AG04449 (cell line): ENCODE measurements at regions of chr5 and their contacts with region 1.

Region 1: GRCh38 chr5:138449501-138450239 is 10.8 kb downstream of the REEP2 start:
- DNase-seq: no peak
- H3K4me3 ChIP-seq: no peak overlapping the region
- CTCF ChIP-seq: peak; percentile 99

Region 2: GRCh38 chr5:138464008-138464387 is 14.3 kb after region 1 on chr5:
- CTCF ChIA-PET with region 1: interaction called, 207 read pairs
- POLR2A ChIA-PET with region 1: interaction called, 24 read pairs
- DNase-seq: no peak
- H3K4me3 ChIP-seq: peak overlapping the region; percentile 82
- CTCF ChIP-seq: peak; percentile 87

Region 3: GRCh38 chr5:138491669-138492559 is 42.2 kb after region 1 on chr5:
- CTCF ChIA-PET with region 1: interaction called, 407 read pairs
- POLR2A ChIA-PET with region 1: interaction called, 3 read pairs
- DNase-seq: no peak
- H3K4me3 ChIP-seq: peak overlapping the region; percentile 62
- CTCF ChIP-seq: no peak

Region 4: DNA sequence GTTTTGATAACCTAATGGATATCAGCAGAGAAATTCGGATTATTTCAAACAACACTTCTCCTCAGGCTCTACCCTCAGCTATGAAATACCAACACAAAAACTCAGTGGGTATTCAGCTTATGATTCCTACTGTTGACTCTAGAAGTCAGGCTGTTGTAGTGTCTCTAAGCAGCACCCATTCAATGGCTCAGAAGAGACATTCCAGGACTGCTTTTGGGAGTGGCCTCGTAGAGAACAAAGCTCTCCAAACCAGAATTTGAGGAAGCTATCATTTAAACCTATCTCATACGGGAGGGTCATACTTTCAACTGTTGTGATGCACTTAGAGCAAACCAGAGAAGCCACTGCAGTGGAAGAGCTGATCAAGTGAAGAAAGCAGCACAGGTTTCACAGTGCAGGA is 59.3 kb after region 1 on chr5:
- CTCF ChIA-PET with region 1: interaction called, 407 read pairs
- POLR2A ChIA-PET with region 1: no interaction called
- DNase-seq: no peak
- H3K4me3 ChIP-seq: no peak overlapping the region
- CTCF ChIP-seq: no peak

Region 5: DNA sequence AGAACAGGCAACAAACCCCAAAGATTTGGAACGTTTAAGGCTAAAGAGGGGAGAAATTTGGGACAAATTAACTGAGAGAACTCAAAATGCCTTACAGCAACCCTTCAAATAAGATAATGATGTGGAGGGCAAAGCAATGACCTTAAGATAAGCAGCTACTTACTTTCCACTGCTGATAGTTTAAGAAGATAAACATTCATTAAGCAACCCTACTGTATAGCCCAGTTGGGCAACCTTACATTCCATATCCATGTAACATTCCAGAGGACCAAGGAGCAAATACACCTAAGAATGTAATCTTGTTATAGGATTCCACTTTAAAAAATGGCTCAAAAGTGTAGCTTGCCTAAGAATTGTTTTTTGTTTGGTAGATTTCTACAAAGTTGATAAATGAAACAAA is 78.5 kb after region 1 on chr5:
- CTCF ChIA-PET with region 1: interaction called, 10 read pairs
- POLR2A ChIA-PET with region 1: no interaction called
- DNase-seq: no peak
- H3K4me3 ChIP-seq: no peak overlapping the region
- CTCF ChIP-seq: no peak

Region 6: GRCh38 chr5:138927979-138928378 is 478.3 kb after region 1 on chr5:
- CTCF ChIA-PET with region 1: no interaction called
- POLR2A ChIA-PET with region 1: no interaction called
- DNase-seq: no peak
- H3K4me3 ChIP-seq: no peak overlapping the region
- CTCF ChIP-seq: no peak